Cardiac septum (tissue), 1 donor: ENCODE measurements at regions of chrX and their contacts with region 1.

Region 1: DNA sequence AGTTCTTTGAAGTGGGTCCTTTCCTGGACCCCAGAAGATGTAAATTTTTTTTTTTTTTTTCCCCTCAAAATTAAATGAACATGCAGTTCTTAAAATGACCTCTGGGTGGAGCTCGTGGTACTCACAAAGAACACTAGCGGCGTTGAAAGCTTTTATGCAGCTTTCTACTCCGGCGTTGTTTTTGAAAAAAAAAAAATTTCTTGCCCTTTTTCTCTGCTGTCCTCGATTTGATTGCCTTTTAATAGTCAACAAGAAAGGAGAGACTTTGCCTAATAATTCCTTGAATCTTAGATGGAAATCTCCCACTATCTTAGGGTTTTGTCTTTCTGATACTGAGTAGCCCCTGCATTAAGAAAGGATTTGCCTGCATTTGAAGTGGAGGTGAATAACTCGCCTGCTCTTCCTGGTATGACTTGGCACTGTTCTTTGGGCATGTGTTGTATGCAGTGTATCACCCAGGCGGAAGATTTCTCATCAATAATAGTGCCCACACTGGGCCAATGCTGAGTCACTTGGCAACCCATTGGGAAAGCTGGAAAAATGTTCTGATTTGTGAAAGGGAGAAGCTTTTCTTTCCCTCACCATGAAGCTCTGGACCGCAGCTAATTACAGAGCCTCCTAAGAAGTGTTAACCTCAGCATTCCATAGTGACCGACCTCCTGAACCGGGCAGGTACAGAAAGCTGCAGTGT is 104.0 kb downstream of the PHEX start:
- DNase-seq: no peak

Region 2: DNA sequence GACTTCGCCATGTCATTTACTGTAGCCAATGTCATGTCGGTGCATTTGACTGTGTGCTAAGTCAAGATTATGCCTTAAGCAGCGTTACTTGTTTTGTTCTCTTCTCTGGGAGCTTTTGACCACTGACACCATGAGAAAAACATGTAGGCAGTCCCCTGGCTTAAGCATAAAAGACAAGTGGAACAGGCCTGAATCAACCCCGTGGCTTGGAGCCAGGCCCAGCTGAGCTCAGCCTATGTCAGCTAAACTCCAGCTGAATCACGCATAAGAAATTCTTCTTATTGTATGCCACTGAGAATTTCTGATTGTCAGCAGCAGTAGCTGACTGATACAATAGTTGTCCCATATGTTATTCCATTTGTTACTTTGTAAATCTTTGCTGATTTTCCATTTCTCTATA is 398.5 kb after region 1 on chrX:
- intact Hi-C with region 1: no loop called
- DNase-seq: no peak

Region 3: GRCh38 chrX:22666441-22666840 is 530.3 kb after region 1 on chrX:
- intact Hi-C with region 1: no loop called
- DNase-seq: no peak

Region 4: GRCh38 chrX:22748093-22748999 is 612.2 kb after region 1 on chrX:
- intact Hi-C with region 1: loop called (anchors 5 kb)
- DNase-seq: peak; percentile 60